Activated naive CD4-positive, alpha-beta T cell treated with anti-CD3 and anti-CD28 coated beads for 36 hours (primary cell): ENCODE measurements at regions of chr11 and their contacts with region 1.

Region 1: GRCh38 chr11:130861902-130862860 is 54.1 kb downstream of the SNX19 start:
- DNase-seq: peak; percentile 91
- H3K4me3 Mint-ChIP-seq: no peak overlapping the region
- H3K27ac Mint-ChIP-seq: no peak overlapping the region
- H3K4me1 Mint-ChIP-seq: peaks cover 4% of the 10 kb centered on the region
- H3K27me3 Mint-ChIP-seq: peaks cover 6% of the 10 kb centered on the region

Region 2: DNA sequence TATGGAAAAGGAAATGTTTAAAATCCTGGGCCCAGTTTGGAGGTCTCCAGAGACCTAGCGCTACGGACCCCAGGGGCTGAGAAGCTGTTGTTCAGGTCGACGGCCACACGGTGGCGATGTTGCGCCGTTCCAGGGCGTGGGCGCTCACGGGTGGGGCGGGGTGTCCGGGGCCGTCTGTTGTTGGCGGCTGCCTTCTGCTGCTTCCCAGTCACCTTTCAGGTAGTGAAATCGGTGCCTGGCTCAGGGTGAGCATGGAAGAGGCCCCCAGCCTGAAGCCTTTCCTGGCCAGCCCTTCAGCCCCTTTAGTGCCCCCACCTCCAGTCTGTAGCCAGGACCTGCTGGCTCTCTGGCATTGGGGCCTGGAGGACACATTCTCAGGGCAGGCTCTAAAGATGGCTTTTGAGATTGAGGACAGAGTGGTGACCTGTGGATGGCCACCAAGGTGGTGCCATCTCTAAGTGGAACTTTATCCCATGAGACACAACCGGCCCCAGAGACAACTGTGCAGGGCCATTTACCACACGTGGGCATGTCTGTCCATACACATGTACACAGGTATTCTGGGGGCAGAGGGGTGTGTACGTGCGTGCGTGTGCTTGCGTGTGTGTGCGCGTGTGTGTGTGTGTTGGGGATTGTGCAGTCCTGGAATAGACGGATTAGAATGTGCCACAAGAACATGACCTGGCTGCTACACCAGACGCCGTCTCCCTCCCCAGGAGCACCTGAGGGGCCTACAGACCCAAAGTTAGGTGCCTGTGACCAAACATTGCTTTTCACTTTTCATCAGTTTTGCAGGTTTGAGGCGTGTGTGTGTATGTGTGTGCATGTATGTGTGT is 648.8 kb before region 1 on chr11:
- CTCF ChIA-PET with region 1: interaction called, 11 read pairs
- intact Hi-C with region 1: loop called (anchors 1 kb)
- DNase-seq: peak; percentile 72
- H3K4me3 Mint-ChIP-seq: no peak overlapping the region
- H3K27ac Mint-ChIP-seq: no peak overlapping the region
- H3K4me1 Mint-ChIP-seq: no peaks in the 10 kb centered on the region
- H3K27me3 Mint-ChIP-seq: no peaks in the 10 kb centered on the region

Region 3: GRCh38 chr11:130442737-130443136 is 419.4 kb before region 1 on chr11:
- CTCF ChIA-PET with region 1: interaction called, 16 read pairs
- intact Hi-C with region 1: no loop called
- DNase-seq: no peak
- H3K4me3 Mint-ChIP-seq: no peak overlapping the region
- H3K27ac Mint-ChIP-seq: no peak overlapping the region
- H3K4me1 Mint-ChIP-seq: peaks cover 9% of the 10 kb centered on the region
- H3K27me3 Mint-ChIP-seq: peaks cover 13% of the 10 kb centered on the region

Region 4: GRCh38 chr11:130872981-130873380 is 10.8 kb after region 1 on chr11:
- CTCF ChIA-PET with region 1: interaction called, 20 read pairs
- intact Hi-C with region 1: no loop called
- DNase-seq: no peak
- H3K4me3 Mint-ChIP-seq: no peak overlapping the region
- H3K27ac Mint-ChIP-seq: no peak overlapping the region
- H3K4me1 Mint-ChIP-seq: peaks cover 12% of the 10 kb centered on the region
- H3K27me3 Mint-ChIP-seq: no peaks in the 10 kb centered on the region

Region 5: GRCh38 chr11:130894322-130895025 is 32.3 kb after region 1 on chr11:
- CTCF ChIA-PET with region 1: interaction called, 14 read pairs
- intact Hi-C with region 1: loop called (anchors 1 kb)
- DNase-seq: peak; percentile 80
- H3K4me3 Mint-ChIP-seq: no peak overlapping the region
- H3K27ac Mint-ChIP-seq: no peak overlapping the region
- H3K4me1 Mint-ChIP-seq: no peaks in the 10 kb centered on the region
- H3K27me3 Mint-ChIP-seq: no peaks in the 10 kb centered on the region